CD8-positive, alpha-beta T cell (primary cell): ENCODE measurements at regions of chr5 and their contacts with region 1.

Region 1: GRCh38 chr5:72816311-72817145 is at the start of gene TNPO1:
- DNase-seq: peak; percentile 75 to 92 (median 82)
- ATAC-seq: peak; percentile 73
- H3K4me3 ChIP-seq: peak within 1 kb of the TSS; percentile 66 to 84
- H3K4me3 Mint-ChIP-seq: peak within 1 kb of the TSS; percentile 90
- H3K27ac ChIP-seq: peak within 1 kb of the TSS; percentile 88 to 91
- H3K27ac Mint-ChIP-seq: peak within 1 kb of the TSS; percentile 92
- H3K4me1 ChIP-seq: peaks cover 16% of the 10 kb centered on the region
- H3K4me1 Mint-ChIP-seq: peaks cover 22% of the 10 kb centered on the region
- H3K27me3 ChIP-seq: peaks cover 0 to 4% of the 10 kb centered on the region in 2 experiments
- H3K27me3 Mint-ChIP-seq: peaks cover 13% of the 10 kb centered on the region
- CTCF ChIP-seq: no peak
- total RNA-seq, gene TNPO1: 76.5 to 96.5 TPM

Region 2: GRCh38 chr5:72366324-72366976 is 450.1 kb before region 1 on chr5:
- CTCF ChIA-PET with region 1: no interaction called
- POLR2A ChIA-PET with region 1: no interaction called
- intact Hi-C with region 1: loop called in 1 of 2 experiments (anchors 5 kb)
- DNase-seq: peak in 5 of 9 experiments; percentile 1 to 49 (median 14)
- ATAC-seq: peak; percentile 44
- H3K4me3 ChIP-seq: no peak overlapping the region
- H3K4me3 Mint-ChIP-seq: no peak overlapping the region
- H3K27ac ChIP-seq: no peak overlapping the region
- H3K27ac Mint-ChIP-seq: no peak overlapping the region
- H3K4me1 ChIP-seq: no peaks in the 10 kb centered on the region
- H3K4me1 Mint-ChIP-seq: no peaks in the 10 kb centered on the region
- H3K27me3 ChIP-seq: no peaks in the 10 kb centered on the region
- H3K27me3 Mint-ChIP-seq: no peaks in the 10 kb centered on the region
- CTCF ChIP-seq: no peak

Region 3: GRCh38 chr5:72611118-72611730 is 205.3 kb before region 1 on chr5:
- CTCF ChIA-PET with region 1: interaction called, 29 read pairs
- POLR2A ChIA-PET with region 1: no interaction called
- intact Hi-C with region 1: loop called (anchors 1 to 2 kb)
- DNase-seq: peak; percentile 1 to 56 (median 34)
- ATAC-seq: peak; percentile 62
- H3K4me3 ChIP-seq: no peak overlapping the region
- H3K4me3 Mint-ChIP-seq: no peak overlapping the region
- H3K27ac ChIP-seq: no peak overlapping the region
- H3K27ac Mint-ChIP-seq: no peak overlapping the region
- H3K4me1 ChIP-seq: no peaks in the 10 kb centered on the region
- H3K4me1 Mint-ChIP-seq: no peaks in the 10 kb centered on the region
- H3K27me3 ChIP-seq: no peaks in the 10 kb centered on the region
- H3K27me3 Mint-ChIP-seq: peaks cover 10% of the 10 kb centered on the region
- CTCF ChIP-seq: peak; percentile 74

Region 4: GRCh38 chr5:72673623-72674022 is 142.9 kb before region 1 on chr5:
- CTCF ChIA-PET with region 1: no interaction called
- POLR2A ChIA-PET with region 1: no interaction called
- intact Hi-C with region 1: no loop called
- DNase-seq: no peak
- ATAC-seq: no peak
- H3K4me3 ChIP-seq: no peak overlapping the region
- H3K4me3 Mint-ChIP-seq: no peak overlapping the region
- H3K27ac ChIP-seq: no peak overlapping the region
- H3K27ac Mint-ChIP-seq: no peak overlapping the region
- H3K4me1 ChIP-seq: no peaks in the 10 kb centered on the region
- H3K4me1 Mint-ChIP-seq: no peaks in the 10 kb centered on the region
- H3K27me3 ChIP-seq: peaks cover 0 to 2% of the 10 kb centered on the region in 2 experiments
- H3K27me3 Mint-ChIP-seq: no peaks in the 10 kb centered on the region
- CTCF ChIP-seq: no peak

Region 5: DNA sequence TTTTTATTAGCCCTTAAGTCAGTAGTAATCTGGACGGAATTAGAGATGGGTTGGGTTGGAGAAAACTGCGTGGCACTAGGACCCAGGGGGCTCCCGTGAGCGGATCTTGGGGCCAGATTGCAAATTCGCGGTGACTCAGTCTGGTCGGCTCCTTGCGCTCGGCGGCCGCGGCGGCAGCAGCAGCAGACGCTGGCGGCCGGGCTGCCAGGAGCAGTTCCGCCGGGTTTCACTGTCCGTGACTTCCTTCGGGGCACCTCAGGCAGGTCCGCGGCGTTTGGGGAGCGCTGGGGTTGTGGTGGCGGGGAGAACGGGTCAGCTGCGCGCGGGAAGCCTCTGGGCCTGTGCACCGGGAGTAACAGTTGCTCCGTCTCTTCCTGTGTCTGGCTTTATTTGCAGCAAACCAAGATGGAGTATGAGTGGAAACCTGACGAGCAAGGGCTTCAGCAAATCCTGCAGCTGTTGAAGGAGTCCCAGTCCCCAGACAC is 31.5 kb after region 1 on chr5:
- CTCF ChIA-PET with region 1: interaction called, 3 read pairs
- POLR2A ChIA-PET with region 1: interaction called, 16 read pairs
- intact Hi-C with region 1: loop called (anchors 1 kb)
- DNase-seq: peak; percentile 59 to 91 (median 82)
- ATAC-seq: peak; percentile 81
- H3K4me3 ChIP-seq: peak overlapping the region; percentile 84 to 89
- H3K4me3 Mint-ChIP-seq: peak overlapping the region; percentile 99
- H3K27ac ChIP-seq: peak overlapping the region; percentile 79 to 81
- H3K27ac Mint-ChIP-seq: peak overlapping the region; percentile 98
- H3K4me1 ChIP-seq: peaks cover 29% of the 10 kb centered on the region
- H3K4me1 Mint-ChIP-seq: peaks cover 61% of the 10 kb centered on the region
- H3K27me3 ChIP-seq: no peaks in the 10 kb centered on the region
- H3K27me3 Mint-ChIP-seq: no peaks in the 10 kb centered on the region
- CTCF ChIP-seq: no peak

Region 6: DNA sequence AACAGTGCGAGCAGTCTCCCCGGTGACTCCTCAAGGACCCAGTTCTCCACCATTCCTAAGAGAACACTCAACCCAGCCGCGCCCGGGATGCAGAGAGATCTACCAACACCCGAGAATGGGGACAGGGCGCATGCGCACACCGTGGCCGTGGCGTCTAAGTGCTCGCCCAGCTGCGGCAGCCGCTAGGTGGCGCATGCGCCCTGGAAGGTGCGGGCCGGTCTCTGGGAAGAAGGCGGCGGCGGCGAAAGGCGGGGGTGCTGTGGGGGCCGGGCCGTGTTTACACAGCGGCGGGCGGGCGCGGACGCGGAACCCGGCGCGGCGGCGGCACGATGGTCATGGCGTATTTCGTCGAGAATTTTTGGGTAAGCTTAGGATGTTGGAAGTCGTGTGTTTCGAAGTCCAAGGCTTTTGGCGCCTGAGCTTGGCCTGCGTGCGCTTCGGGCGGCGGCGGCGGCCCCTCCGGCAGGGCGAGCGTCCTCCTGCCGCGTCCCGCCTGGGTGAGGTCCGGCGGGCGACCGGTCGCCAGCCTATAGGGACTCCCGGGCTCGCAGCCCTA is 139.3 kb after region 1 on chr5 and contains the start of gene FCHO2:
- CTCF ChIA-PET with region 1: interaction called, 5 read pairs
- POLR2A ChIA-PET with region 1: no interaction called
- intact Hi-C with region 1: loop called in 1 of 2 experiments (anchors 2 kb)
- DNase-seq: peak; percentile 88 to 98 (median 96)
- ATAC-seq: peak; percentile 90
- H3K4me3 ChIP-seq: peak within 1 kb of the TSS; percentile 61 to 95
- H3K4me3 Mint-ChIP-seq: peak within 1 kb of the TSS; percentile 95
- H3K27ac ChIP-seq: no peak within 1 kb of the TSS
- H3K27ac Mint-ChIP-seq: peak within 1 kb of the TSS; percentile 88
- H3K4me1 ChIP-seq: peaks cover 12% of the 10 kb centered on the region
- H3K4me1 Mint-ChIP-seq: peaks cover 15% of the 10 kb centered on the region
- H3K27me3 ChIP-seq: peaks cover 6 to 9% of the 10 kb centered on the region in 2 experiments
- H3K27me3 Mint-ChIP-seq: peaks cover 41% of the 10 kb centered on the region
- CTCF ChIP-seq: peak; percentile 65
- total RNA-seq, gene FCHO2: 2.4 to 2.9 TPM

Region 7: DNA sequence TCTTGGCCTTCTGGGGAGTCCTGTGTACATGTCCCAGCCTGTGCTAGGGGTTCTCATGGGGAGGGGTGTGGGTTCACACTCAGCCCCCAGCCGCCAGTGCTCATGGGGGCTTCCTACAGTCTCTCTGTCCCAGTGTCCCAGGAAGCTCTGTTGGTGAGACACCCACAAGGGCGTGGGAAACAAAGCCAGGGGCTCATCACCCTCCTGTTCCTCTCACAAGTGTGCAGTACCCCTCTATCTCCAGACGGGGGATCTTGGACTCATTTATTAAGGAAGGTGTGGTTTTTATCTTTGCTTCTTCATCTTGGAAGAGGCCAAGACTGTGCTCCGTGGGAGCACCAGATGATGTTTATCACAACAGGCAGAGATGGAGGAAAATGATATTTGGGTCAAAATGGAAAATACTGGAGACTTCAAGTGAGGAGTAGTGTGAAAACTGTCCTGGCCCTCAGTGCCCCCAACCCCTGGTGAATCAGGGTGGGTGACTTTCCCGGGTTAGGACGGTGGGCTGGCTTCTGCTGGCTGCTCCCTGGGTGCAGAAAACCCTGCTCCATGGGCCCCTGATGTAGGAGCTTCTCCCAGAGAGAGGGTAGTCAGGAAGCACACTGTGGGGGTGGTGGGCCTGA is 319.0 kb after region 1 on chr5:
- CTCF ChIA-PET with region 1: no interaction called
- POLR2A ChIA-PET with region 1: no interaction called
- intact Hi-C with region 1: no loop called
- DNase-seq: peak in 2 of 9 experiments; percentile 19 to 52
- ATAC-seq: peak; percentile 42
- H3K4me3 ChIP-seq: no peak overlapping the region
- H3K4me3 Mint-ChIP-seq: no peak overlapping the region
- H3K27ac ChIP-seq: no peak overlapping the region
- H3K27ac Mint-ChIP-seq: no peak overlapping the region
- H3K4me1 ChIP-seq: no peaks in the 10 kb centered on the region
- H3K4me1 Mint-ChIP-seq: peaks cover 3% of the 10 kb centered on the region
- H3K27me3 ChIP-seq: peaks cover 0 to 8% of the 10 kb centered on the region in 2 experiments
- H3K27me3 Mint-ChIP-seq: peaks cover 39% of the 10 kb centered on the region
- CTCF ChIP-seq: peak; percentile 28

Region 8: DNA sequence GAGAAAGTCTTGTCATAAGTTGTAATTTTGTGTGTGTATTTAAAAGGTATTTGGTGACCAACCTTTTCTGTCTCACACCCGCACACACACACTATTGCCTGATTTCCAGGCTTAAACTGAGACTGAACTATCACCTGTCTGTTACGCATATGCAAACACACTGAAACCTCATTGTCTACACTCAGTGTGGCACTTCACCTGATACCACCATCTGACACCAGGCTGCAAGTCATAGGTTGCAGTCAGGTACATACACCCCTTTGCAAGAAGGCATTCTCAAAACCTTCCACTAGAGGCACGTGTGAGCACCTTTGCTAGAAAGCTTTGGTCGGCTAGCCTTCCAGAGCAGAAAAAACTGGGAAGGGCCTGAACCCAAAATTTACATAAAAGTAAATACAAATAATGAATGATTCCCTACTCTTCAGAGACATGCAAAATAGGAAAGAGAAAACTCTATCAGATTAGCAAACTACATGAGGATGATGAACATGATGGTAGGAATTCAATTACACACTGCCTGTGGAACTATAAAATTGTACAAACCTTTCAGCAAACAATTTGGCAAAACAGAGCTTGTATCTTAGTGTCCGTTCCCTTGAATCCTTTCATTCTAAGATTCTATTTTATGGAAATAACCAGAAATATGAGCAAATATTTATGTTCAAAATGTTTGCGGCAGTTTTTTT is 638.0 kb after region 1 on chr5:
- CTCF ChIA-PET with region 1: no interaction called
- POLR2A ChIA-PET with region 1: no interaction called
- intact Hi-C with region 1: loop called in 1 of 2 experiments (anchors 10 kb)
- DNase-seq: peak in 5 of 9 experiments; percentile 27 to 71 (median 45)
- ATAC-seq: peak; percentile 82
- H3K4me3 ChIP-seq: no peak overlapping the region
- H3K4me3 Mint-ChIP-seq: no peak overlapping the region
- H3K27ac ChIP-seq: no peak overlapping the region
- H3K27ac Mint-ChIP-seq: no peak overlapping the region
- H3K4me1 ChIP-seq: peaks cover 5% of the 10 kb centered on the region
- H3K4me1 Mint-ChIP-seq: peaks cover 6% of the 10 kb centered on the region
- H3K27me3 ChIP-seq: peaks cover 36 to 39% of the 10 kb centered on the region in 2 experiments
- H3K27me3 Mint-ChIP-seq: peaks cover 67% of the 10 kb centered on the region
- CTCF ChIP-seq: peak; percentile 71

Region 9: GRCh38 chr5:73498057-73499008 is 681.8 kb after region 1 on chr5 and contains the start of gene BTF3:
- CTCF ChIA-PET with region 1: no interaction called
- POLR2A ChIA-PET with region 1: no interaction called
- intact Hi-C with region 1: loop called in 1 of 2 experiments (anchors 1 kb)
- DNase-seq: peak; percentile 77 to 97 (median 93)
- ATAC-seq: peak; percentile 89
- H3K4me3 ChIP-seq: peak within 1 kb of the TSS; percentile 95 to 96
- H3K4me3 Mint-ChIP-seq: peak within 1 kb of the TSS; percentile 97
- H3K27ac ChIP-seq: peak within 1 kb of the TSS; percentile 97 to 99
- H3K27ac Mint-ChIP-seq: peak within 1 kb of the TSS; percentile 100
- H3K4me1 ChIP-seq: peaks cover 38% of the 10 kb centered on the region
- H3K4me1 Mint-ChIP-seq: peaks cover 50% of the 10 kb centered on the region
- H3K27me3 ChIP-seq: no peaks in the 10 kb centered on the region
- H3K27me3 Mint-ChIP-seq: peaks cover 5% of the 10 kb centered on the region
- CTCF ChIP-seq: no peak
- total RNA-seq, gene BTF3: 808 to 815 TPM